IMR-90 (cell line): ENCODE measurements at regions of chr19 and their contacts with region 1.

Region 1: GRCh38 chr19:16041299-16041990 is 34.9 kb upstream of the TPM4 start:
- DNase-seq: peak; percentile 52
- ATAC-seq: peak; percentile 99
- H3K4me3 ChIP-seq: no peak overlapping the region
- H3K27ac ChIP-seq: peak overlapping the region; percentile 12
- H3K4me1 ChIP-seq: peaks cover 2% of the 10 kb centered on the region
- H3K27me3 ChIP-seq: no peaks in the 10 kb centered on the region
- CTCF ChIP-seq: peak; percentile 96
- POLR2A ChIP-seq: no peak
- RAD21 ChIP-seq: peak; percentile 92

Region 2: DNA sequence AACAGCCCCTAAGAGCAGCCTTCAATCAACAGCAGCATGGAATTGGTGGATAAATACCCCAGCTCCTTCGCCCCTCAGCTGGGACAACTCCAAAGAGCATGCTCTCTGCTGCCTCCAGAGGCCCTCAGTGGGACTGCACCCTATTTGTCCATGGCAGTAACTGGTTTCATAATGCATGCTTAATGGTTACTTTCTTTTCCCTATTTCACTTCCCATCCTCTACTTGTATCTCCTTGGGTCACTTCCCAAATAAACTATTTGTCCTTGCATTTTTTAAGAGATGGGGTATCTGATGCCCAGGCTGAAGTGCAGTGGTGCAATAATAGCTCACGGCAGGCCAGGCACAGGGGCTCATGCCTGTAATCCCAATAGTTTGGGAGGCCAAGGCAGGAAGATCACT is 21.3 kb after region 1 on chr19:
- CTCF ChIA-PET with region 1: interaction called, 11 read pairs
- POLR2A ChIA-PET with region 1: no interaction called
- dilution Hi-C with region 1: no loop called
- in situ Hi-C with region 1: no loop called
- intact Hi-C with region 1: no loop called
- DNase-seq: no peak
- ATAC-seq: no peak
- H3K4me3 ChIP-seq: no peak overlapping the region
- H3K27ac ChIP-seq: no peak overlapping the region
- H3K4me1 ChIP-seq: peaks cover 14% of the 10 kb centered on the region
- H3K27me3 ChIP-seq: no peaks in the 10 kb centered on the region
- CTCF ChIP-seq: peak; percentile 63
- POLR2A ChIP-seq: no peak
- RAD21 ChIP-seq: peak; percentile 31; the same call in 1 of the 2 replicates

Region 3: GRCh38 chr19:16111160-16111908 is 69.9 kb after region 1 on chr19 and contains the start of gene RAB8A:
- CTCF ChIA-PET with region 1: interaction called, 5 read pairs
- POLR2A ChIA-PET with region 1: no interaction called
- dilution Hi-C with region 1: no loop called
- in situ Hi-C with region 1: no loop called
- intact Hi-C with region 1: loop called (anchors 1 kb)
- DNase-seq: peak; percentile 99
- ATAC-seq: peak; percentile 95
- H3K4me3 ChIP-seq: peak within 1 kb of the TSS; percentile 76
- H3K27ac ChIP-seq: peak within 1 kb of the TSS; percentile 76
- H3K4me1 ChIP-seq: peaks cover 7% of the 10 kb centered on the region
- H3K27me3 ChIP-seq: no peaks in the 10 kb centered on the region
- CTCF ChIP-seq: peak; percentile 98
- POLR2A ChIP-seq: no peak
- RAD21 ChIP-seq: peak; percentile 54
- total RNA-seq, gene RAB8A: 135 and 158 TPM in 2 replicates

Region 4: DNA sequence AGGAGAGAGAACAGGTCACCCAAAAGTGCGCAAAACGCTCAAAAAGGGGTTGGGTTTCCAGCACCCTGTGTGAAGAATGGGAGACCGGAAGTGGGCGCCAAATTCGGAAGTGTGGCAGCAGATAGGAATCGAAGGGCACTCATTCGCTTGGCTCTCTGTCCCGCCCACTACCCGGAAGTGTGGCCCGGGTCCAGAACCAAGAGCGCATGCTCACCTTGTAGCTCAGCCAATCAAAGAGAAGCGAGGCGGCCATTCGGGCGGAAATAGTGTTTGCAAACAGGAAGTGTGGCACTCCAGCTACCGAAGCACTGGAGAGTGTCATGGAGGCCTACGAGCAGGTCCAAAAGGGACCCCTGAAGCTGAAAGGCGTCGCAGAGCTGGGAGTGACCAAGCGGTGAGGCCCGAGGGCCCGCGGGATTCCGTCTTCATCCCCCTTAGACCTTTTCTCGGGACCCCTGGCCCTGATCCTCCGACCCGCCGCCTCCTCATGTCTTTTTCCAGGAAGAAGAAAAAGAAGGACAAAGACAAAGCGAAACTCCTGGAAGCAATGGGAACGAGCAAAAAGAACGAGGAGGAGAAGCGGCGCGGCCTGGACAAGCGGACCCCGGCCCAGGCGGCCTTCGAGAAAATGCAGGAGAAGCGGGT is 143.8 kb after region 1 on chr19 and contains the start of gene FAM32A:
- CTCF ChIA-PET with region 1: interaction called, 19 read pairs
- POLR2A ChIA-PET with region 1: interaction called, 3 read pairs
- dilution Hi-C with region 1: no loop called
- in situ Hi-C with region 1: no loop called
- intact Hi-C with region 1: loop called (anchors 1 kb)
- DNase-seq: peak; percentile 99
- ATAC-seq: peak; percentile 86
- H3K4me3 ChIP-seq: peak within 1 kb of the TSS; percentile 65
- H3K27ac ChIP-seq: peak within 1 kb of the TSS; percentile 66
- H3K4me1 ChIP-seq: peaks cover 3% of the 10 kb centered on the region; the same call in 1 of the 2 replicates
- H3K27me3 ChIP-seq: no peaks in the 10 kb centered on the region
- CTCF ChIP-seq: peak; percentile 22; the same call in 1 of the 2 replicates
- POLR2A ChIP-seq: peak; percentile 92
- RAD21 ChIP-seq: no peak
- total RNA-seq, gene FAM32A: 99.2 and 99.5 TPM in 2 replicates